ENCODE measurements at regions of chr6 and their contacts with region 1.

Region 1: DNA sequence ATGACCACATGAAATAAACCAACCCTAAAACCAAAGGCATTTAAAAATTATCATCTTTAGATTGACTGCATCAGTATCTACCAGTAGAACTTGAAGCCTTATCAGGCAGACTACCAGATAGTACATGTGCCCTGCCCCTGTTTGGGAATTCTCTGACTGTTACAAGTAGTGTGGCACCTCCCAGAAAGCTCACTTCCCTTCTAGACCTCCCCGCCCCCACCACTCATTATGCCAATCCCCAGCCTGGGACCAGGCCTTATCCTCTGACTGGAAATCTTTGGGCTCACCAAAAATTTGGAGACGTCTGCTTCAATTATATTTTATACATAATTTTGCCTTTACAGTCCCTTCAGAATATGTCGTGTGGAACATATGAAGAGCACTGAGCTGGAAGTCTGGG is 155.6 kb downstream of the TFAP2B start:
- DNase-seq: no peak
- H3K4me3 Mint-ChIP-seq: no peak overlapping the region
- H3K27ac Mint-ChIP-seq: no peak overlapping the region
- H3K4me1 Mint-ChIP-seq: no peaks in the 10 kb centered on the region
- H3K27me3 Mint-ChIP-seq: no peaks in the 10 kb centered on the region

Region 2: GRCh38 chr6:50442531-50443040 is 531.7 kb before region 1 on chr6:
- CTCF ChIA-PET with region 1: no interaction called
- POLR2A ChIA-PET with region 1: no interaction called
- intact Hi-C with region 1: no loop called
- DNase-seq: no peak
- H3K4me3 Mint-ChIP-seq: no peak overlapping the region
- H3K27ac Mint-ChIP-seq: no peak overlapping the region
- H3K4me1 Mint-ChIP-seq: no peaks in the 10 kb centered on the region
- H3K27me3 Mint-ChIP-seq: no peaks in the 10 kb centered on the region

Region 3: DNA sequence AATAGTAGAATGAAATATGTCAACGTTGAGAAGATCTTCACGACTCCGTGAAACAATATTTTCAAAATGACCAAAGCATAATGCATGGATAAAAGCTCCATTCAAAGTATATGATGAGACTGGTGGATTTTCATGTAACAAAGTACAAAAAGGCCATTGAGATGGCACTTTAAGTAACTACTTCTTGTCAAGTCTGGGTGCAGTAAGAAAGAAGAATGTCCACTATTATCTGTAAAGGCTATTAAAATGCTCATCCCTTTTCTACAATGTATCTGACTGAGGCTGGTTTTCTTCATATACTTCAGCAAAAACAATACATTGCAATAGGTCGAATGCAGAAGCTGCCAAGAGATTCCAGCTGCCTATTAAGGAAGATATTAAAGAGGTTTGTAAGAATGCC is 655.7 kb after region 1 on chr6:
- CTCF ChIA-PET with region 1: no interaction called
- POLR2A ChIA-PET with region 1: no interaction called
- intact Hi-C with region 1: loop called (anchors 5 kb)
- DNase-seq: no peak
- H3K4me3 Mint-ChIP-seq: no peak overlapping the region
- H3K27ac Mint-ChIP-seq: no peak overlapping the region
- H3K4me1 Mint-ChIP-seq: no peaks in the 10 kb centered on the region
- H3K27me3 Mint-ChIP-seq: no peaks in the 10 kb centered on the region